Mammary epithelial cell (primary cell): ENCODE measurements at regions of chr4 and their contacts with region 1.

Region 1: DNA sequence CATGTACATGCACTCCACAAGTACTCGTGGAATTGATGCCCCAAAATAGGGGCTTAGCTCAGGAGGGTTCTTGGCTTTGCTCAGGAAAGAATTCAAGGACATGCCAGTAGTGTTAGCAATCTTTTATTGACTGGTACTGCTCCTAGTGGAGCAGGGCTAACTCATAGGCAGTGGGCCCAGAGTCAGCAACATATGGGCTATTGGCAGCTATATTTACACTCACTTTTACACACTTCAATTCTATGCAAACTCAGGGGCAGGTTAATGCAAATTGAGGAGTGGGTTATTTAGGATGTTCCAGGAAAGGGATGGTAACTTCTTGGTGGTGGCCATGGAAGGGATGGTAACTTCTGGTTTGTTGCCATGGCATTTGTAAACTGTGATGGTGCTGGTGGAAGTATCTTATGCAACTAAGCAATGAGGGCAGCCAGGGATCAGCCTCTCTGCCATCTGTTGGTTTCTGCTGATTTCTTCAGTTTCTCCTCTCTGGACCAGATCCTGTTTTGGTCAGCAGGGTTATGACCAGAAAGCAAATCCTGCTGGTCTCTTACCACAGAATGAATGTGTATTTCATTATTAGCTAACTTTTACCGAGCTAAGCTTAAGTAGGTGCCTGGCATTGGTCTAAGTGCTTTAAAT is 69.2 kb upstream of the FAT1 start:
- DNase-seq: no peak
- H3K4me3 ChIP-seq: no peak overlapping the region
- H3K27ac ChIP-seq: no peak overlapping the region
- H3K4me1 ChIP-seq: no peaks in the 10 kb centered on the region
- H3K27me3 ChIP-seq: no peaks in the 10 kb centered on the region
- CTCF ChIP-seq: no peak

Region 2: DNA sequence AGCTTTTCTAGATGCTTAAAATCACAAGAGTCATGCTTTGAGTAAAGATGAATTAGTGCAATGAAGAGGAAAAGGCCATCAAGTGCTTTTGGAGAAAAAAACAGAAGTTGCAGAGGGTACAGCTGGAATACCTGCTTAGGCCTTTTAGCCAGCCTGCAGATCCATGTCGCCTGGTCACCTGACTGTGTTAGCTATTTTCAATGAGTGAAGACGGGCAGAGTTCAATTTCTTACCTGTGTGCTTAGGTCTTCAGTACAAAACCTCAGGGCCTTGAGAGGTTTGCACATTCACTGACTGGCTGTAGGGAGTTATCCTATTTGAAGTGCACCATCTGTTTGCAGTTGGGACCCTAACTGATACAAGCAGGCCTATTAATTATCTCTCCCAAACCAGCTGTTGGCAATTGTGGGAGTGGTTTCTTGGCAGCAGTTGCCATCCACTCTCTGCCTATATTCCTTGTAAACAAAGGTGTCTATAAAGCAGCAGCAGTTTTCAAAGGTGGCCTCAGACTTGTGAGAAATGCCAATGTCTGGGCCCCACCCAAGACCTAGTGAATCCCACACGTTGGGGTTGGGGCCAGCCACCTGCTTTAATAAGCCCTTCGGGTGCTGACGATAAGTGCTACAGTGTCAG is 52.9 kb before region 1 on chr4:
- CTCF ChIA-PET with region 1: no interaction called
- dilution Hi-C with region 1: loop called (anchors 5 kb)
- in situ Hi-C with region 1: no loop called
- intact Hi-C with region 1: no loop called
- DNase-seq: no peak
- H3K4me3 ChIP-seq: no peak overlapping the region
- H3K27ac ChIP-seq: no peak overlapping the region
- H3K4me1 ChIP-seq: peaks cover 17% of the 10 kb centered on the region
- H3K27me3 ChIP-seq: no peaks in the 10 kb centered on the region
- CTCF ChIP-seq: no peak

Region 3: GRCh38 chr4:186808635-186809018 is 15.8 kb after region 1 on chr4:
- CTCF ChIA-PET with region 1: no interaction called
- dilution Hi-C with region 1: no loop called
- in situ Hi-C with region 1: no loop called
- intact Hi-C with region 1: no loop called
- DNase-seq: peak; percentile 73
- H3K4me3 ChIP-seq: no peak overlapping the region
- H3K27ac ChIP-seq: peak overlapping the region; percentile 12
- H3K4me1 ChIP-seq: peaks cover 16% of the 10 kb centered on the region
- H3K27me3 ChIP-seq: no peaks in the 10 kb centered on the region
- CTCF ChIP-seq: no peak